Esophagus muscularis mucosa (tissue), 4 donors: ENCODE measurements at regions of chr17 and their contacts with region 1.

Region 1: GRCh38 chr17:36534840-36535668 is at the starts of genes MYO19 and PIGW:
- DNase-seq: peak; percentile 95
- H3K4me3 ChIP-seq: peak within 1 kb of the TSS; percentile 73 to 89 (median 78)
- H3K27ac ChIP-seq: peak within 1 kb of the TSS; percentile 91 to 99 (median 95)
- H3K4me1 ChIP-seq: peaks cover 13 to 23% (median 17%) of the 10 kb centered on the region in 4 donors
- H3K27me3 ChIP-seq: no peaks in the 10 kb centered on the region
- CTCF ChIP-seq: peak in 2 of 3 experiments; percentile 8 to 21
- EP300 ChIP-seq: no peak
- POLR2A ChIP-seq: peak; percentile 90
- total RNA-seq, gene MYO19: 29.5 to 68.1 (median 44.3) TPM
- total RNA-seq, gene PIGW: 2.5 to 6.5 (median 4.4) TPM

Region 2: DNA sequence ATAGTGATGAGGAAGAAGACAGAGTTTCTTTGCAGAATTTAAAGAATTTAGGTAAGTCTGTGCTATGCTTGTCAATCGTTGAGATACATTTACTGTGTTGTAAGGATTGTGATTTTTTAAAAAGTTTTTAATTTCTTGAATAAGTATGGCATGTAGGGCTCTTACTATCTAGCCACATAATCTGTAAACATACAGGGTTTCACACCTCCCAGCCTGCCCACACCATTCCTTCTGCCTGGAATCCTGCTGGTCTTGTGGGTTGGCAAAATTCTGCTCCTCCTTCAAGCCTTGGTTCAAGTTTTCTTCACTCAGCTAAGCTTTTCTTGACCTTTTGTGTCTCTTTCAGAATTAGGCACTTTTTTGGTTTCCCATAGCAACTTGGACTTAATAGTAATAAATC is 41.1 kb before region 1 on chr17:
- intact Hi-C with region 1: loop called (anchors 5 kb)
- DNase-seq: no peak
- H3K4me3 ChIP-seq: no peak overlapping the region
- H3K27ac ChIP-seq: no peak overlapping the region
- H3K4me1 ChIP-seq: peaks cover 1 to 9% (median 3%) of the 10 kb centered on the region in 4 donors
- H3K27me3 ChIP-seq: no peaks in the 10 kb centered on the region
- CTCF ChIP-seq: no peak
- EP300 ChIP-seq: no peak
- POLR2A ChIP-seq: no peak

Region 3: DNA sequence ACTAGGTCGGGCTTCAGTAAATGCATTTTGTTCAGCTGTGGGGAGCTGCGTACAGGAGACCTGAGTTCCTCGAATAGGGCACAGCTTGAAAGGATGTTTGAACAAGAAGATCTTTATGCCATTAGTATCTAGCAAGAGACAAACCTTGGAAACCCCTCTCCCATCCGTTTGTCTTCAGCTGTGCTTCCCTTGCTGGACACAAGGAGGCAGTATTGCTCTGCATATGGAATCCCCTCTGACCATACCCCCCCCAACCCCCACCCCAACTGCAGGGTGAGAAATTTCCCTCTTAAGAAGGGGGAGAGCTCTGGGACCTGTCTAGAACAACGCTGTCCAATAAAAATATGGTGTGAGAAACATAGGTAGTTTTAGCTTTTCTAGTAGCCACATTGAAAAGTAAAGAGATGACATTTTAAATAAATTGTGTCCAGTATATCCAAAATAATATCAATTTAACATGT is 67.9 kb after region 1 on chr17:
- intact Hi-C with region 1: no loop called
- DNase-seq: no peak
- H3K4me3 ChIP-seq: peak overlapping the region; percentile 71 to 95 (median 81)
- H3K27ac ChIP-seq: peak overlapping the region in 1 of 4 donors; percentile 87
- H3K4me1 ChIP-seq: peaks cover 21 to 37% (median 31%) of the 10 kb centered on the region in 4 donors
- H3K27me3 ChIP-seq: no peaks in the 10 kb centered on the region
- CTCF ChIP-seq: peak; percentile 63 to 87 (median 69)
- EP300 ChIP-seq: no peak
- POLR2A ChIP-seq: no peak